PC-3 (cell line): ENCODE measurements at regions of chr1 and their contacts with region 1.

Region 1: GRCh38 chr1:208988811-208989222 is 594.7 kb upstream of the CAMK1G start:
- DNase-seq: peak; percentile 62
- ATAC-seq: peak; percentile 73
- H3K4me3 ChIP-seq: peak overlapping the region; percentile 61
- H3K27ac ChIP-seq: peak overlapping the region; percentile 8; the same call in 1 of the 2 replicates
- H3K4me1 ChIP-seq: peaks cover 33% of the 10 kb centered on the region
- H3K27me3 ChIP-seq: no peaks in the 10 kb centered on the region
- CTCF ChIP-seq: no peak

Region 2: GRCh38 chr1:208781391-208782045 is 207.3 kb before region 1 on chr1:
- CTCF ChIA-PET with region 1: no interaction called
- POLR2A ChIA-PET with region 1: no interaction called
- intact Hi-C with region 1: loop called (anchors 10 kb)
- DNase-seq: no peak
- ATAC-seq: no peak
- H3K4me3 ChIP-seq: no peak overlapping the region
- H3K27ac ChIP-seq: no peak overlapping the region
- H3K4me1 ChIP-seq: no peaks in the 10 kb centered on the region
- H3K27me3 ChIP-seq: no peaks in the 10 kb centered on the region
- CTCF ChIP-seq: no peak

Region 3: DNA sequence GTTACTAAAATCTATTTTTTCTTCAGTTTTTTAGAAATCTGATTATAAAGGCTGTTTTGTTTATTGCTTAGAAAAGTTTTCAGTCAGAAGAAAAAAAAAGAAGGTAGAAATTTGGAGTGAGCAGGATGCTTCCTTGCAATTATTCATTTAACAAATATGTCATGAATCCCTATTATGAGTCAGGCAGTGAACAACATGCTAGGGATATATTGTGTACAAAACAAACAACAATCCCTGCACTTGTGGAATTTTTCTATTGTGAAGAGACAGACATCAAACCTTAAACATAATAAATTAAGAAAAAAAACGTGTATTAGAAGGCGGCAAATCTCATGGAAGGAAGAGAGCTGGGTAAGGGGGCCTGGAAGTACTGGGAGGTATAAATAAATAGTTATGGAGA is 69.4 kb before region 1 on chr1:
- CTCF ChIA-PET with region 1: no interaction called
- POLR2A ChIA-PET with region 1: no interaction called
- intact Hi-C with region 1: loop called (anchors 2 kb)
- DNase-seq: peak; percentile 94
- ATAC-seq: peak; percentile 63
- H3K4me3 ChIP-seq: no peak overlapping the region
- H3K27ac ChIP-seq: peak overlapping the region; percentile 91
- H3K4me1 ChIP-seq: peaks cover 63% of the 10 kb centered on the region
- H3K27me3 ChIP-seq: no peaks in the 10 kb centered on the region
- CTCF ChIP-seq: no peak

Region 4: DNA sequence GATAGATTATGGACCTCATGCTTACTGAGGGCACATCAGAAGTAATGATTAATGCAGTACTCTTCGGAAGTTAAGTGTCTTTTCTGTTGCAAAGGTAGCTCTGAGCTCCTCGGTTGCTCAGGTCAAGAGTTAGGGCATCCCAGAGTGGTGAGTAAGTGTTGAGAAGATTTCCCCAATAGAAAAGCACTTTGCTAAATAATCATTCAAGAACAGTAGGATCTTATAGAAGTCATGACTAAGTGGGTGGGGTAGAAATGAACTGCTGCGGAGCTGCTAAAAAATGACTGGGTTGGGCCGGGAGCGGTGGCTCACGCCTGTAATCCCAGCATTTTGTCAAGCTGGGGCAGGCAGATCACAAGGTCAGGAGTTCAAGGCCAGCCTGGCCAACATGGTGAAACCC is 53.9 kb before region 1 on chr1:
- CTCF ChIA-PET with region 1: no interaction called
- POLR2A ChIA-PET with region 1: no interaction called
- intact Hi-C with region 1: loop called (anchors 5 kb)
- DNase-seq: peak; percentile 96
- ATAC-seq: peak; percentile 79
- H3K4me3 ChIP-seq: no peak overlapping the region
- H3K27ac ChIP-seq: peak overlapping the region; percentile 95
- H3K4me1 ChIP-seq: peaks cover 48% of the 10 kb centered on the region
- H3K27me3 ChIP-seq: no peaks in the 10 kb centered on the region
- CTCF ChIP-seq: no peak